ENCODE measurements at regions of chrX and their contacts with region 1.

Region 1: GRCh38 chrX:119468930-119469635 is 839 bp downstream of the SLC25A5 start:
- DNase-seq: peak; percentile 74 to 82
- H3K4me3 ChIP-seq: peak overlapping the region; percentile 73 to 79 (median 75)
- H3K27ac ChIP-seq: peak overlapping the region; percentile 84 to 95
- H3K4me1 ChIP-seq: no peaks in the 10 kb centered on the region
- H3K27me3 ChIP-seq: peaks cover 0 to 5% of the 10 kb centered on the region in 2 donors
- CTCF ChIP-seq: peak; percentile 21 to 67 (median 22)
- POLR2A ChIP-seq: no peak

Region 2: GRCh38 chrX:119155416-119156035 is 313.6 kb before region 1 on chrX:
- intact Hi-C with region 1: loop called (anchors 5 kb)
- DNase-seq: no peak
- H3K4me3 ChIP-seq: no peak overlapping the region
- H3K27ac ChIP-seq: no peak overlapping the region
- H3K4me1 ChIP-seq: no peaks in the 10 kb centered on the region
- H3K27me3 ChIP-seq: peaks cover 0 to 59% of the 10 kb centered on the region in 2 donors
- CTCF ChIP-seq: no peak
- POLR2A ChIP-seq: no peak

Region 3: GRCh38 chrX:119505945-119506344 is 36.9 kb after region 1 on chrX:
- intact Hi-C with region 1: loop called (anchors 2 kb)
- DNase-seq: no peak
- H3K4me3 ChIP-seq: no peak overlapping the region
- H3K27ac ChIP-seq: no peak overlapping the region
- H3K4me1 ChIP-seq: no peaks in the 10 kb centered on the region
- H3K27me3 ChIP-seq: no peaks in the 10 kb centered on the region
- CTCF ChIP-seq: no peak
- POLR2A ChIP-seq: no peak

Measured in breast epithelium (tissue), 4 donors.